Posterior vena cava (tissue), 2 donors: ENCODE measurements at regions of chr11 and their contacts with region 1.

Region 1: DNA sequence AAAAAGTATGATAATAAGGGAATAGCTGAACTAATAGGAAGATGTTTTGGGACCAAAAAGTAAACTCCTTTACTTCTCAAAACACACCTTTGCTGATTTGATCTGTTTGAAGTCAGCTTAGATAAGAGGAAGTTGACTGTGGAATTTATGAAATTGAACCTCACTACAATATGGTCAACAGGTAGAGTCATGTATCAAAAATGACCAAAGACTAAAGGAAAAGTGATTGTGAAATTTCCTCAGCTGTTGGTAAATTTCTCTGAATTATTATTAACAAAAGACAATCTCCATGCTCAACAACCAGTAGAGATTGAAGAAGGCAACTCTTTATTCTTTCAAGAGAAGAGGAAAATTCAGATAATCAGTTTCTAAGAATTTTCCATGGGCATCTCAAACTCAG is 826.5 kb downstream of the KCNA4 start:
- DNase-seq: no peak

Region 2: DNA sequence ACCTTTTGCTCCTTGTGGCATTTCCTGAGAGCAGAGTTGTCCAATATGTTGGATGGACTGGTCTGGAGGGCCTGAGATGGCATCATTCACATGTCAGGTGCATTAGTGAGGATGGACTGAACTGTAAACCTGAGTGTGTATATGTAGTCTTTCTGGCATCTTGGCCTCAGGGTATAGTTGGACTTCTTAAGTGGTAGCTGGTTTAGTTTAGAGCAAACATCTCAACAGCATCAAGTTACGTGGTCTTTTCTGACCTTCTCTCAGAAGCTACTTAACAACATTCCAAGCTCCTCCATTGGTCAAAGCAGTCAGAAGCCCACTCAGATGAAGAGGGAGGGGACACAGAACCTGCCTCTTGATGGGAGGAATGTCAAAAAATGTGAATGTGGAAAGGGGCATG is 252.2 kb before region 1 on chr11:
- intact Hi-C with region 1: no loop called
- DNase-seq: no peak

Region 3: GRCh38 chr11:29100968-29101367 is 89.3 kb before region 1 on chr11:
- intact Hi-C with region 1: no loop called
- DNase-seq: no peak

Region 4: DNA sequence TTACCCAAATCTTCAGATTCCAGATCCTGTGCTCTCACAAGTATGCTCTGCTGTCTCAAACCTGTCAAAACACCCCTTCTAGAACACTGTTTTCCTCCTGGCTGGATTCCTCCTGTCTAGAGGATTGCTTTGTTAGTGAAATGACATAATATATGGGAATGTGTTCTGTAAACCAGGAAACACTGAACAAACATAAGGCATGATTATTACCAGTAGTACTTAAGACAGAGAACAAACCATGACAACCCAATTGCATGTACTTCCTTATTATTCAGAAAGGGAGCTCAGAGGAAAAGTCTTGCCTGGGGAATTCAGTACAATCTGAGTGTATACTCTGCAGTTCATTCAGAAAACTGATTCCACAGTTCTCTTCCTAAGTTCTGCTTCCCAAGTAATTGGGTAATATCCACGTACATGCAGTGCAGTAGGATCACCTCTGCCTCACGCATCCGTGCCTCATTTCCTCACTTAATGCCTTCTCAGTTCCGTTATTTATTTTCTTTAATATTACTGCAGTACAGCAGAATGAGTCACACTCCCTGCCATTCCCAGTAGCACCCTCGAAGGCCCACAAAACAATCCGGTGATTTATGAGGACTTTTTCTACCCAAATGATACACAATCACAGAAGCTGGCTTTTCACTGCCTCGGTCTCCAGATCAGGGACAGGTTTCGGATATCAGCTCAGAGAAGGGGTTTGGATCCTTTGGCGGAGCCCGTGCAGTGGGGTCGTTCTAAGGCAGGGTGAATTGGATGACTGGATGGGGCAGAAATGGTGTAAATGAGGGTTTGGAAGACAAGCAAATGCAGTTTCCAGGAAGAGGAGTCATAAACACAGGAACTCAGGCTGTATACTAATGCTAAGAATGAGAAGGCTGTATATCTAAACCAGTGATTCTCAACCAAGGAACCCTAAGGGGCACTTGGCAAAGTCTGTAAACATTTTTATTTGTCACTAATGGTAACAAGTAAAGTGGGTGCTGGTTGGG is 70.3 kb before region 1 on chr11:
- intact Hi-C with region 1: loop called in 1 of 2 experiments (anchors 10 kb)
- DNase-seq: no peak